ENCODE measurements at regions of chr3 and their contacts with region 1.

Region 1: GRCh38 chr3:124540550-124541211 is 189.6 kb upstream of the UMPS start:
- DNase-seq: no peak
- H3K4me3 ChIP-seq: no peak overlapping the region
- H3K27ac ChIP-seq: peak overlapping the region in 14 of 59 donors; percentile 14 to 57 (median 36)
- H3K27me3 ChIP-seq: no peaks in the 10 kb centered on the region
- CTCF ChIP-seq: no peak

Region 2: GRCh38 chr3:124358156-124358555 is 182.5 kb before region 1 on chr3:
- intact Hi-C with region 1: loop called in 1 of 2 experiments (anchors 5 kb)
- DNase-seq: no peak
- H3K4me3 ChIP-seq: no peak overlapping the region
- H3K27ac ChIP-seq: peak overlapping the region in 2 of 59 donors; percentile 21 to 27
- H3K27me3 ChIP-seq: no peaks in the 10 kb centered on the region
- CTCF ChIP-seq: no peak

Region 3: GRCh38 chr3:124395584-124396338 is 144.9 kb before region 1 on chr3:
- intact Hi-C with region 1: no loop called
- DNase-seq: no peak
- H3K4me3 ChIP-seq: peak overlapping the region in 2 of 59 donors; percentile 4 to 7
- H3K27ac ChIP-seq: peak overlapping the region in 50 of 59 donors; percentile 2 to 88 (median 59)
- H3K27me3 ChIP-seq: no peaks in the 10 kb centered on the region
- CTCF ChIP-seq: no peak

Region 4: DNA sequence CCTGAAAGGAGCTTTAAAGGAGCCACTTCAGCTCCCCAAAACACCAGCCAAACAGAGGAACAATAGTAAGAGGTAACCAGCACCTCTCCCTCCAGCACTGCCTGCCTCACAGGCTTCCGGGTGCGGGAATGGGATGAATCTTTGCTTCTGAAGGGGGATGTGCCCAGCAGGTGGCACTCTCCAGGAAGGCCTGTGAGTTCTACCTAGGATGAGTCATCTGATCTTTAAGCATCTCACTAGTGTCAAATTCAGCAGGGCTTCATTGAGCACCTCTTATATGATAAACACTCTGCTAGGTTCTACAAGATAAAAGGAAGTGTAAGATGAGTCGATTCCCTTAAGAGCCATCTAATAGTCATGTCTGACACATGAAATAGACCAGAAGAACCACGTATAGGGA is 47.9 kb before region 1 on chr3:
- intact Hi-C with region 1: loop called in 1 of 2 experiments (anchors 10 kb)
- DNase-seq: peak in 7 of 10 donors; percentile 20 to 74 (median 55)
- H3K4me3 ChIP-seq: no peak overlapping the region
- H3K27ac ChIP-seq: peak overlapping the region in 13 of 59 donors; percentile 1 to 66 (median 28)
- H3K27me3 ChIP-seq: no peaks in the 10 kb centered on the region
- CTCF ChIP-seq: peak in 52 of 56 donors; percentile 20 to 66 (median 50)